ENCODE measurements at regions of chr16 and their contacts with region 1.

Region 1: GRCh38 chr16:16073891-16074881 is 124.8 kb downstream of the ABCC1 start:
- DNase-seq: peak; percentile 90
- H3K4me3 Mint-ChIP-seq: peak overlapping the region; percentile 11
- H3K27ac Mint-ChIP-seq: peak overlapping the region; percentile 84
- H3K4me1 Mint-ChIP-seq: peaks cover 39% of the 10 kb centered on the region
- H3K27me3 Mint-ChIP-seq: no peaks in the 10 kb centered on the region
- CTCF ChIP-seq: no peak

Region 2: GRCh38 chr16:15874745-15875314 is 199.4 kb before region 1 on chr16:
- CTCF ChIA-PET with region 1: interaction called, 8 read pairs
- intact Hi-C with region 1: loop called (anchors 5 kb)
- DNase-seq: peak; percentile 68
- H3K4me3 Mint-ChIP-seq: no peak overlapping the region
- H3K27ac Mint-ChIP-seq: no peak overlapping the region
- H3K4me1 Mint-ChIP-seq: peaks cover 16% of the 10 kb centered on the region
- H3K27me3 Mint-ChIP-seq: no peaks in the 10 kb centered on the region
- CTCF ChIP-seq: peak; percentile 61

Region 3: GRCh38 chr16:16021988-16022682 is 52.1 kb before region 1 on chr16:
- CTCF ChIA-PET with region 1: no interaction called
- intact Hi-C with region 1: loop called (anchors 5 kb)
- DNase-seq: peak; percentile 93
- H3K4me3 Mint-ChIP-seq: peak overlapping the region; percentile 44
- H3K27ac Mint-ChIP-seq: peak overlapping the region; percentile 13
- H3K4me1 Mint-ChIP-seq: peaks cover 61% of the 10 kb centered on the region
- H3K27me3 Mint-ChIP-seq: no peaks in the 10 kb centered on the region
- CTCF ChIP-seq: no peak

Region 4: GRCh38 chr16:16127469-16128116 is 53.4 kb after region 1 on chr16:
- CTCF ChIA-PET with region 1: no interaction called
- intact Hi-C with region 1: loop called (anchors 2 kb)
- DNase-seq: peak; percentile 84
- H3K4me3 Mint-ChIP-seq: no peak overlapping the region
- H3K27ac Mint-ChIP-seq: no peak overlapping the region
- H3K4me1 Mint-ChIP-seq: no peaks in the 10 kb centered on the region
- H3K27me3 Mint-ChIP-seq: no peaks in the 10 kb centered on the region
- CTCF ChIP-seq: peak; percentile 92

Measured in Calu3 (cell line).